ENCODE measurements at regions of chr19 and their contacts with region 1.

Region 1: GRCh38 chr19:18091217-18091608 is 4.5 kb upstream of the IL12RB1 start:
- DNase-seq: peak; percentile 94
- H3K4me3 Mint-ChIP-seq: peak overlapping the region; percentile 61
- H3K27ac Mint-ChIP-seq: peak overlapping the region; percentile 97
- H3K4me1 Mint-ChIP-seq: peaks cover 59% of the 10 kb centered on the region
- H3K27me3 Mint-ChIP-seq: no peaks in the 10 kb centered on the region

Region 2: DNA sequence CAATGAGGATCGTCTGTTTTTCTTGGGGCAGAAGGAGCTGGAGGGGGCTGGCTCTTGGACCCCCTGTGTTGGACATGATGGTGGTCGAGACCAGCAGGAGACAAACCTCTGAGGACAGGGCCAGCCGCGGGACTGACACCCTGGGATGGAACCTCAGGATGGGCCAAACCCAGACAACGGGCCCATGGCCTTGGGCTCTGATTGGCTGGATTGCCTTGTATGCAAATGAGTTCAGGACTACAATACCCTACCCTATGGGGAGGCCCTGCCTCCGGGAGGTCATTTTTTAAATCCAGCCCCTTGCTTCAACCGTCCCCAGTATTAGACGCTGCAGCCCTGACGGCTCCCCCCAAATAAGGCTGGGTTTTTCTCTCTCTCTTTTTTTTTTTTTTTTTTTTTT is 197.4 kb before region 1 on chr19:
- CTCF ChIA-PET with region 1: no interaction called
- intact Hi-C with region 1: no loop called
- DNase-seq: no peak
- H3K4me3 Mint-ChIP-seq: no peak overlapping the region
- H3K27ac Mint-ChIP-seq: no peak overlapping the region
- H3K4me1 Mint-ChIP-seq: no peaks in the 10 kb centered on the region
- H3K27me3 Mint-ChIP-seq: no peaks in the 10 kb centered on the region

Region 3: DNA sequence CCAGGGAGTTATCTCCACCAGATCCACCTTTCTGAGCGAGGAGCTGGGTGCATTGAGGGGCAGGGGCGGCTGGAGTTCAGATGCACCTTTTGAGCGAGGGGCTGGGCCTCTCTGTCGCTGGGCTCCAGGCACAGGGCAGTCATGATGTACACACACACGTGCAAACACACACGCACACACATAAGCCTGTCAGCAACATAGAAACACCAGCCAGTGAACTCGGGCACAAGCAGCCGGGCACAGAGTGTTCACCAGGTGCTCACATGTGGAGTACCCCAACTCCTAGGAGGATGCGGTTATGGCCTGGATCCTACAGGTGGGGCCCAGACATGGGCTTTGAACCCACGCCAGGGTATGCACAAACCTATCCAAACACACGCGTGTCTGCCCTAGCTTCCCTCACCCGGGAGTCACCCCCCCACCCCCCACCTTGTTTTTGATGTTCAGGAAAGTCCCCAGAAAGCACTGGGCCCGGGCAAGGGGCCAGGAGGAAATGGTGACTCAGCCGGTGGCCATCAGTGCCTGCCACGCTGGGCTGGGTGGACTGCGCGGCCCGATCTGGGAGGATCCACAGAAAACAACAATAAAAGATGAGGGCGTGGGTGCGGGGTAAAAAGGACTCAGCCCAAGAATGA is 70.0 kb before region 1 on chr19:
- CTCF ChIA-PET with region 1: no interaction called
- intact Hi-C with region 1: loop called (anchors 5 kb)
- DNase-seq: peak; percentile 80
- H3K4me3 Mint-ChIP-seq: peak overlapping the region; percentile 78
- H3K27ac Mint-ChIP-seq: peak overlapping the region; percentile 79
- H3K4me1 Mint-ChIP-seq: peaks cover 64% of the 10 kb centered on the region
- H3K27me3 Mint-ChIP-seq: no peaks in the 10 kb centered on the region

Region 4: DNA sequence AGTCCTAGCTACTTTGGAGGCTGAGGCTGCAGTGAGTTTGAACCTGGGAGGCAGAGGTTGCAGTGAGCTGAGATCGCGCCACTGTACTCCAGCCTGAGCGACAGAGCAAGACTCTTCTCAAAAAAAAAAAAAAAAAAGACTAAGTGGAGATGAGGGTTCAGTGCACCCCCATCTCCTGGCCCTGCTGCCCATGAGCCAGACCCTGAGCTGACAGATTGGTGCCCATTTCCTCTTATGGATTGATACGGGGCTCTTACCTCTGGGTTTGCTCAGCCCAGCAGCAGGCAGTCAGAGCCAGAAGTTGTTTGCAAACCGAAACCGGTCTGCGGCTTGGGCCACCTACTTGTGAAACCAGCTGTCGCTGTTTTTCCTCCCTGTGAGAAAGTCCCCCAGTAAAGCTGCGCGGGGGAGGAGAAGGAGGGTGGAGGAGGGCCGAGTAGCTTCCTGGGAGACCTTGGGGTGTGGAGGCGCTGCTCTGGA is 46.3 kb before region 1 on chr19:
- CTCF ChIA-PET with region 1: no interaction called
- intact Hi-C with region 1: loop called (anchors 2 kb)
- DNase-seq: peak; percentile 98
- H3K4me3 Mint-ChIP-seq: peak overlapping the region; percentile 64
- H3K27ac Mint-ChIP-seq: peak overlapping the region; percentile 21
- H3K4me1 Mint-ChIP-seq: peaks cover 42% of the 10 kb centered on the region
- H3K27me3 Mint-ChIP-seq: peaks cover 3% of the 10 kb centered on the region

Region 5: GRCh38 chr19:18128044-18128443 is 36.8 kb after region 1 on chr19:
- CTCF ChIA-PET with region 1: no interaction called
- intact Hi-C with region 1: no loop called
- DNase-seq: no peak
- H3K4me3 Mint-ChIP-seq: no peak overlapping the region
- H3K27ac Mint-ChIP-seq: no peak overlapping the region
- H3K4me1 Mint-ChIP-seq: no peaks in the 10 kb centered on the region
- H3K27me3 Mint-ChIP-seq: no peaks in the 10 kb centered on the region

Region 6: DNA sequence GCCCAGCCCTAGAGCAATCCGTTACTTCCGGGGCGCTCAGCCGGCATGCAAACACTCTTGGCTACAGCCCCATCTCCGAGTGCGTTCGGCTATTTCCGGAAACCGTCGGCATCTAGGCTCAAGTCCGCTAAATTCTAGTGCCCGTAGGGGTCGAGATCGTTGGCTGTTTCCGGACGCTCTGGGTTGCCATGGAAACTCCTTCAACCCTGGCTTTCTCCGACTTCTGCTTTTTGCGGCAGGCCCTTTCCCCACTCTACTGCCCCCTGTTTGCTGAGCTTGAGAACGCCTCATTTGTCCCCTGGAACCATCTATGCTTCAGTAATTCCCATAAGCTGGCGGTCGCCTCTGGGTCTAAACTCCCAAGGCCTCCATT is 61.2 kb after region 1 on chr19:
- CTCF ChIA-PET with region 1: interaction called, 6 read pairs
- intact Hi-C with region 1: loop called (anchors 1 kb)
- DNase-seq: peak; percentile 100
- H3K4me3 Mint-ChIP-seq: peak overlapping the region; percentile 79
- H3K27ac Mint-ChIP-seq: peak overlapping the region; percentile 93
- H3K4me1 Mint-ChIP-seq: peaks cover 22% of the 10 kb centered on the region
- H3K27me3 Mint-ChIP-seq: no peaks in the 10 kb centered on the region

Region 7: DNA sequence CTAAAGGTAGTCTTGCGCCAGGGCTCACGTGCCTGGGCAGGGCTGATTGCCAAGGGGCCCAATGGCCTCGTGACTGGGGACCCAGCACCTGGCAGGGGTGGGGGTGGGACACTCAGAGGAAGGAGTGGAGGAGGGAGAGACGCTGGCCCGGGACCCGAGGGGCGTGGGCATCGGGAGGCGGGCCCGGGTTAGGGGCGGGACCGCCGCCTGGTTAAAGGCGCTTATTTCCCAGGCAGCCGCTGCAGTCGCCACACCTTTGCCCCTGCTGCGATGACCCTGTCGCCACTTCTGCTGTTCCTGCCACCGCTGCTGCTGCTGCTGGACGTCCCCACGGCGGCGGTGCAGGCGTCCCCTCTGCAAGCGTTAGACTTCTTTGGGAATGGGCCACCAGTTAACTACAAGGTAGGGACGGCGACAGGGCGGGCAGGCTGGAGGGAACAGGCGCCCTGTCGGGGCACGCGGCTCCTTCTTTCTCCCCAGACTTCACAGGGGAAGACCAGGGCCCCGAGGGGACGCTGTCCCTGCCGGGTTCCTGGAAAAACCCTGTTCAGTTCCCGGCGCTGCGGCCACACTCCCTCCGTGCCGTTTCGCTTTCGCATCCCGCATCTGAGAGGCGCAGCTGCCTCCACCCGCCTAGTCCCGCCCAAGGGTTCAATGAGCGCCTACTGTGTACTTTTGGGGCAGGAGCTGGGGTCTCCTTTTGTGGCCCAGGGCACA is 82.5 kb after region 1 on chr19 and contains the start of gene IFI30:
- CTCF ChIA-PET with region 1: no interaction called
- intact Hi-C with region 1: no loop called
- DNase-seq: peak; percentile 68
- H3K4me3 Mint-ChIP-seq: peak within 1 kb of the TSS; percentile 81
- H3K27ac Mint-ChIP-seq: no peak within 1 kb of the TSS
- H3K4me1 Mint-ChIP-seq: peaks cover 6% of the 10 kb centered on the region
- H3K27me3 Mint-ChIP-seq: no peaks in the 10 kb centered on the region
- total RNA-seq, gene IFI30: 19.0 to 20.8 TPM

Region 8: DNA sequence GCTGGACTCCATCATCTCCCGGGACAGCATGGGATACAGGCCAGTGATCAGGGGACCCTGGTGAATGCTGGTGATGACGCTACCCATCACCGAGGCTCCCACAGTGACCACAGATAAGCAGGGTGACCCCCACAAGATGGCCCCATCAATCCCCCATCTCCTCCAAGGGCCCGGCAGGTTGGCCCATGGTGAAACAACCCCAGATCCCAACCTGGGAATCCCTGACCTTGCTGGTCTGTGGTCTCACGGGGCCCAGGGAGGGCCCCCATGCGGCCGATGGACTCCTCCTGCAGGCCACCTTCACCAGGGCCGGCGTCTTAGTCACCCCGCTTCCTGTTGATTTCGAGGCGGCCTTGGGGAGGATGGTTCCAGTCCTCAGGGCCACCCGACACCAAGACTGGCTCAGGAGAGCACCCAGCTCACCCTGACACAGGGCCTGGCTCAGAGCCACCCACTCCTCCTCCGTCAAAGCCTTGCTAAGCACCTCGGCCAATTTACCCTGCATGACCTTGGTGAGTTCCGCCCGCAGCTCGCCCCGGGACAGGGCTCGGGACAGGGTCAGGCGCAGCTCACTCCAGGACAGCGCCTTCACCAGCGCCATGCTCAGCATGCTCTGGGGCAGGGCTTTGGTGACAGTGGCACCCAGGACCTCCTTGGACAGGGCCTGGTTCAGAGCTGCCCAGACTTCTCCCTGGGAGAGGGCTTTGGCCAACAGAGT is 173.1 kb after region 1 on chr19:
- CTCF ChIA-PET with region 1: no interaction called
- intact Hi-C with region 1: no loop called
- DNase-seq: no peak
- H3K4me3 Mint-ChIP-seq: no peak overlapping the region
- H3K27ac Mint-ChIP-seq: no peak overlapping the region
- H3K4me1 Mint-ChIP-seq: no peaks in the 10 kb centered on the region
- H3K27me3 Mint-ChIP-seq: no peaks in the 10 kb centered on the region

Measured in activated naive CD4-positive, alpha-beta T cell treated with anti-CD3 and anti-CD28 coated beads for 36 hours (primary cell).